ENCODE measurements at regions of chr2 and their contacts with region 1.

Region 1: GRCh38 chr2:61993444-61994024 is 88.1 kb downstream of the COMMD1 start:
- DNase-seq: peak; percentile 62
- ATAC-seq: peak; percentile 81
- H3K4me3 ChIP-seq: no peak overlapping the region
- H3K27ac ChIP-seq: no peak overlapping the region
- H3K4me1 ChIP-seq: no peaks in the 10 kb centered on the region
- H3K27me3 ChIP-seq: no peaks in the 10 kb centered on the region
- CTCF ChIP-seq: peak; percentile 77
- POLR2A ChIP-seq: no peak
- RAD21 ChIP-seq: peak; percentile 80

Region 2: GRCh38 chr2:61922714-61923113 is 70.8 kb before region 1 on chr2:
- CTCF ChIA-PET with region 1: no interaction called
- POLR2A ChIA-PET with region 1: no interaction called
- dilution Hi-C with region 1: no loop called
- in situ Hi-C with region 1: no loop called
- intact Hi-C with region 1: loop called (anchors 1 kb)
- DNase-seq: no peak
- ATAC-seq: no peak
- H3K4me3 ChIP-seq: no peak overlapping the region
- H3K27ac ChIP-seq: no peak overlapping the region
- H3K4me1 ChIP-seq: no peaks in the 10 kb centered on the region
- H3K27me3 ChIP-seq: no peaks in the 10 kb centered on the region
- CTCF ChIP-seq: no peak
- POLR2A ChIP-seq: no peak
- RAD21 ChIP-seq: no peak

Region 3: GRCh38 chr2:62014102-62014501 is 20.6 kb after region 1 on chr2:
- CTCF ChIA-PET with region 1: interaction called, 4 read pairs
- POLR2A ChIA-PET with region 1: interaction called, 10 read pairs
- dilution Hi-C with region 1: no loop called
- in situ Hi-C with region 1: no loop called
- intact Hi-C with region 1: no loop called
- DNase-seq: peak; percentile 70
- ATAC-seq: peak; percentile 75
- H3K4me3 ChIP-seq: no peak overlapping the region
- H3K27ac ChIP-seq: no peak overlapping the region
- H3K4me1 ChIP-seq: peaks cover 1% of the 10 kb centered on the region; the same call in 1 of the 2 replicates
- H3K27me3 ChIP-seq: no peaks in the 10 kb centered on the region
- CTCF ChIP-seq: 0 out of 2 replicates have a peak, but pooled peaks have one; percentile 15
- POLR2A ChIP-seq: no peak
- RAD21 ChIP-seq: no peak

Region 4: GRCh38 chr2:62074233-62074632 is 80.7 kb after region 1 on chr2:
- CTCF ChIA-PET with region 1: no interaction called
- POLR2A ChIA-PET with region 1: no interaction called
- dilution Hi-C with region 1: no loop called
- in situ Hi-C with region 1: no loop called
- intact Hi-C with region 1: no loop called
- DNase-seq: peak; percentile 17
- ATAC-seq: no peak
- H3K4me3 ChIP-seq: no peak overlapping the region
- H3K27ac ChIP-seq: no peak overlapping the region
- H3K4me1 ChIP-seq: no peaks in the 10 kb centered on the region
- H3K27me3 ChIP-seq: no peaks in the 10 kb centered on the region
- CTCF ChIP-seq: no peak
- POLR2A ChIP-seq: no peak
- RAD21 ChIP-seq: no peak

Region 5: GRCh38 chr2:62114564-62114963 is 121.0 kb after region 1 on chr2:
- CTCF ChIA-PET with region 1: no interaction called
- POLR2A ChIA-PET with region 1: no interaction called
- dilution Hi-C with region 1: no loop called
- in situ Hi-C with region 1: no loop called
- intact Hi-C with region 1: no loop called
- DNase-seq: no peak
- ATAC-seq: no peak
- H3K4me3 ChIP-seq: no peak overlapping the region
- H3K27ac ChIP-seq: no peak overlapping the region
- H3K4me1 ChIP-seq: peaks cover 1% of the 10 kb centered on the region; the same call in 1 of the 2 replicates
- H3K27me3 ChIP-seq: no peaks in the 10 kb centered on the region
- CTCF ChIP-seq: no peak
- POLR2A ChIP-seq: no peak
- RAD21 ChIP-seq: no peak